Left ventricle myocardium superior (tissue), 1 donor: ENCODE measurements at regions of chr9 and their contacts with region 1.

Region 1: GRCh38 chr9:19379697-19380046 is 364 bp downstream of the RPS6 start:
- DNase-seq: no peak
- ATAC-seq: peak; percentile 64

Region 2: DNA sequence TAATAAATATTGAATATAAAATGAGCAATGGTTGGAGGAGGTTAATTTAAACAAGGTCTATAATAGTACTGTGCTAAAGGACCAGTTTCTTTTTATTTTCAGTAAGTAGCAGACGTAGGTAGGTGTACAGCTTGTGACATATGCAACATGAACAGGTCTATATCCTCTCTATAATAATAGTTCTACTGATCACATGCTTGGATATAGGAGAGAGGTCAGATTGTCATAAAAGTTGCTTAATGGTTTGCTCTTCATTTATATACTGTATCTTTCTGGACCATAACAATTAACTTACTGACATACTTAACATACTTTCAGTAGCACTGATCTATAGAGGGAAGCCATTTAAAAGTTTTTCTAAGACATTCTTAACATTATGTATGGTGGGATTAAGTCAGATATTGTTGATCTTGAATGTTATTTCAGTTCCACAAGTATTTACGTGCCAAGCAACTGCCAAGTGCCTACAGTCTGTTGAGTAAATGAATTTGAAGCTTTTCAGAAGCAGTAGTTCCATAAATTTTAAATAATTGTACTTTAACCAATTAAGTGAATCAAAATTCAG is 81.2 kb before region 1 on chr9:
- intact Hi-C with region 1: no loop called
- DNase-seq: no peak
- ATAC-seq: no peak

Region 3: DNA sequence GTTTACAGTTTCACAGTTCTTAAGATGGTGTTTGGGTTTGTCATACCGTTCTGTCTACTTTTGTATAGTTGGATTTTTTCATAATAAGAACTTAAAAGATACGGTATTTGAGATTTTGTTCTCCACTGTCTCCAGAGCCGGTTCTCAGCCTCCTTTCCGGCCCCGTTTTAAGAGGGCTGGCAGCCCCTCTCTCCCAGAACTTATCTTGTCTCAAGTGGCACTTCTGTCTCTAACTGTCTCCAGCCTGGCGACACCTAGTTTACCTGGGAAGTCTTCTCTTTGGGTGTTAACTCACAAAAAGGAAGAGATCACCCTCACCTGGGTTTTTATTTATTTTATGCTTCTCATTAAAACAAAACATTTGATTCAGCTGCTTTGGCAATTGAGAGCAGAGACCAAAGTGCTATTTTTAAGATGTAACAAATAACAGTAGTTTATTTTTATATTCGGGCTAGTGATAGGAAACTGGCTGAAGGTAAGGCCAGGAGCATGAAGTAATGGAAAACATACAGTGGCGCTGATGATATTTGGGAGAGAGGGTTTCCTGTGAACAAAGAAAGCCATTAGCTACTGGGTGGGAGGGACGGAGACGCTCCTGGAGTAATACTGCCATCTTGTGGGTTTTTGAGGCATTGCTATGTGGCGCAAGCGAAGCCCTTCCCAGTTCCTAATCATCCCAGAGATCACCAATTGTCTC is 77.5 kb after region 1 on chr9:
- intact Hi-C with region 1: loop called (anchors 2 kb)
- DNase-seq: peak; percentile 40
- ATAC-seq: peak; percentile 97